Calu3 (cell line): ENCODE measurements at regions of chr10 and their contacts with region 1.

Region 1: GRCh38 chr10:58052772-58053171 is 214.9 kb downstream of the IPMK start:
- DNase-seq: no peak
- H3K4me3 Mint-ChIP-seq: no peak overlapping the region
- H3K27ac Mint-ChIP-seq: peak overlapping the region; percentile 29
- H3K4me1 Mint-ChIP-seq: peaks cover 17% of the 10 kb centered on the region
- H3K27me3 Mint-ChIP-seq: no peaks in the 10 kb centered on the region
- CTCF ChIP-seq: no peak

Region 2: DNA sequence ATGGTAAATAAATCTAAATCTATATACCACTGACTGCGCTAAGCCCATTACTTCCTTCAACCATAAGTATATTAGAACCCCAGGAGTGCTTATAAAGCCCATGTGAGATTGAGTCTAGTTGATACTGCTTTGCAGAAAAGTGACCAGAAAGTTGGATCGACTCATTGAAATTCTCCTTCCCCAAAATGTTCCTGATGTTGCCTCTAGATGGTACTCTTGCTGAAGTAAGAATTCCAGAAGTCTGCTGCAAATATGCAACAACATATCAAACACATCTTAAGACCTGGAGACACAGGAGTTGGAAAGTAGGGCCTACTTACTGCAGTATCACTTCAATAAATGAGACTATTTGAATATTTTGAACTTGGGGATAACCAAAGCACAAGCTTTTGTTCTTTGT is 335.9 kb before region 1 on chr10:
- CTCF ChIA-PET with region 1: no interaction called
- intact Hi-C with region 1: loop called (anchors 1 kb)
- DNase-seq: peak; percentile 12
- H3K4me3 Mint-ChIP-seq: no peak overlapping the region
- H3K27ac Mint-ChIP-seq: no peak overlapping the region
- H3K4me1 Mint-ChIP-seq: peaks cover 25% of the 10 kb centered on the region
- H3K27me3 Mint-ChIP-seq: no peaks in the 10 kb centered on the region
- CTCF ChIP-seq: peak; percentile 50